BJ (cell line): ENCODE measurements at regions of chr19 and their contacts with region 1.

Region 1: GRCh38 chr19:33532859-33533460 is 11.4 kb upstream of the PEPD start:
- DNase-seq: no peak
- H3K4me3 ChIP-seq: no peak overlapping the region
- H3K27me3 ChIP-seq: peaks cover 8% of the 10 kb centered on the region
- CTCF ChIP-seq: no peak

Region 2: GRCh38 chr19:33521480-33522370 is 11.2 kb before region 1 on chr19 and contains the start of gene PEPD:
- CTCF ChIA-PET with region 1: no interaction called
- POLR2A ChIA-PET with region 1: interaction called, 19 read pairs
- DNase-seq: peak; percentile 27
- H3K4me3 ChIP-seq: peak within 1 kb of the TSS; percentile 96
- H3K27me3 ChIP-seq: peaks cover 2% of the 10 kb centered on the region; the same call in 1 of the 2 replicates
- CTCF ChIP-seq: no peak
- polyA plus RNA-seq, gene PEPD: 69.8 and 97.6 TPM in 2 replicates